ENCODE measurements at regions of chr21 and their contacts with region 1.

Region 1: GRCh38 chr21:44347911-44348753 is 5.3 kb upstream of the TRPM2 start:
- DNase-seq: no peak
- H3K4me3 ChIP-seq: no peak overlapping the region
- H3K4me1 ChIP-seq: no peaks in the 10 kb centered on the region
- H3K27me3 ChIP-seq: peaks cover 2% of the 10 kb centered on the region; the same call in 1 of the 2 replicates

Region 2: GRCh38 chr21:44285509-44285992 is 62.6 kb before region 1 on chr21 and contains the start of gene AIRE:
- in situ Hi-C with region 1: no loop called
- DNase-seq: no peak
- H3K4me3 ChIP-seq: no peak within 1 kb of the TSS
- H3K4me1 ChIP-seq: peaks cover 13% of the 10 kb centered on the region
- H3K27me3 ChIP-seq: no peaks in the 10 kb centered on the region

Region 3: DNA sequence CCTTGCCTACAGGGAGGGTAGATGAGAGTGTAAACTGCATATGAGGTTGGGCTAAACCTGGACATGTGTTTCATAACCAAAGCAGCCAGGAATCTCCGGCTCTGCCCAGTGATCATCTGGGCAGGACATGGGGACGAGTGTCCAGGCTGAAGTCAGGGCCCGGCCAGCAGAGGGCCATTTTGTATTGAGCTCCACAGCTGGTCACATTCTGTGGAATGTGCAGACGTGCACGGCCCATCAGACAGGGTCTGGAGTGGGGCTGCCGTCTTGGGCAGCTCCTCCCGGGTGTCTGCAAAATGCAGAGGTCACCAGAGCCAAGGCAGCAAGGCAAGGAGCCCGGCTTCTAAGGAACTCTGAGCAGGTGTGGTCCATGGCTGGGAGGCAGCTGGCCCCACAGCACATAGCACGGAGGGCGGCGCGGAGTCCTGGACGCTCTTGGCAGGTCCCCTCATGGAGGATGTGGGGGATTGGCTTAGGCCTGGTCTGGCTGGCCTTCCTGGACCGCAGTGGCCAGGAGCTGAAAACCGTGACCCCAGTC is 113.4 kb after region 1 on chr21:
- in situ Hi-C with region 1: loop called (anchors 10 kb)
- DNase-seq: no peak
- H3K4me3 ChIP-seq: no peak overlapping the region
- H3K4me1 ChIP-seq: no peaks in the 10 kb centered on the region
- H3K27me3 ChIP-seq: no peaks in the 10 kb centered on the region

Region 4: DNA sequence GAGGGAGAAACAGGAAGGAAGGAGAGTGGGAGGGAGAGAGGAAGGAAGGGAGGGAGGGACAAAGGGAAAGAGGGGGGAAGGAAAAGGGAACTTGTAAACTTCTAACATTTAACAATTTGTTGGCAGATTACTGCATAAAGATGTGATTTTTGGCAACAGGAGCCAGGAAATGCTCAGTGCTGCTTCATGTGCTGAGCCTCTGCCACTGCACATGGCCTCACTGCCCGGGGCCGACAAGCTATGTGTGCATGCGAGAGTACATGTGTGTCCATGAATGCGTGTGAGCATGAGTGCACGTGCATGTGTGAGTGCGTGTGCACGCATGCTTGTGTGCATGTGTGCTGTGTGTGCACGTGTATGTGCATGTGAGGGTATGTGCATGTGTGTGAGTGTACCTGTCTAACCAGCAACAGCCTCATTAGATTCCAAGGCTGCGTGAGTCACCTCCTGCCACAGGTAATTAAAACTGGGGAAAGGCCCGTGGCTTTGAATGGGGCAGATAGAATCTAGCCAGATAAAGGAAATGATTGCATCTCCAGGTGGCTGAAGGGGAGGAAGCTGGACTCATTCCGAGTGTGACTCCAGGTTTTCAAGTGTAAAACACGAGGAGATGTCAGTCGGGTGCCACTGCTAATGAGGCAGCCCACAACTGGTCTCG is 404.6 kb after region 1 on chr21:
- in situ Hi-C with region 1: no loop called
- DNase-seq: no peak
- H3K4me3 ChIP-seq: no peak overlapping the region
- H3K4me1 ChIP-seq: no peaks in the 10 kb centered on the region
- H3K27me3 ChIP-seq: no peaks in the 10 kb centered on the region

Measured in HAP-1 (cell line).